ENCODE measurements at regions of chr3 and their contacts with region 1.

Region 1: GRCh38 chr3:52685709-52686691 is at the starts of genes GNL3 and PBRM1:
- DNase-seq: peak; percentile 95
- H3K4me3 ChIP-seq: peak within 1 kb of the TSS; percentile 81 to 97 (median 89)
- H3K27ac ChIP-seq: peak within 1 kb of the TSS; percentile 76
- H3K4me1 ChIP-seq: peaks cover 20% of the 10 kb centered on the region
- H3K27me3 ChIP-seq: no peaks in the 10 kb centered on the region
- CTCF ChIP-seq: no peak
- total RNA-seq, gene GNL3: 81.5 to 97.8 TPM
- total RNA-seq, gene PBRM1: 53.0 to 85.2 TPM

Region 2: DNA sequence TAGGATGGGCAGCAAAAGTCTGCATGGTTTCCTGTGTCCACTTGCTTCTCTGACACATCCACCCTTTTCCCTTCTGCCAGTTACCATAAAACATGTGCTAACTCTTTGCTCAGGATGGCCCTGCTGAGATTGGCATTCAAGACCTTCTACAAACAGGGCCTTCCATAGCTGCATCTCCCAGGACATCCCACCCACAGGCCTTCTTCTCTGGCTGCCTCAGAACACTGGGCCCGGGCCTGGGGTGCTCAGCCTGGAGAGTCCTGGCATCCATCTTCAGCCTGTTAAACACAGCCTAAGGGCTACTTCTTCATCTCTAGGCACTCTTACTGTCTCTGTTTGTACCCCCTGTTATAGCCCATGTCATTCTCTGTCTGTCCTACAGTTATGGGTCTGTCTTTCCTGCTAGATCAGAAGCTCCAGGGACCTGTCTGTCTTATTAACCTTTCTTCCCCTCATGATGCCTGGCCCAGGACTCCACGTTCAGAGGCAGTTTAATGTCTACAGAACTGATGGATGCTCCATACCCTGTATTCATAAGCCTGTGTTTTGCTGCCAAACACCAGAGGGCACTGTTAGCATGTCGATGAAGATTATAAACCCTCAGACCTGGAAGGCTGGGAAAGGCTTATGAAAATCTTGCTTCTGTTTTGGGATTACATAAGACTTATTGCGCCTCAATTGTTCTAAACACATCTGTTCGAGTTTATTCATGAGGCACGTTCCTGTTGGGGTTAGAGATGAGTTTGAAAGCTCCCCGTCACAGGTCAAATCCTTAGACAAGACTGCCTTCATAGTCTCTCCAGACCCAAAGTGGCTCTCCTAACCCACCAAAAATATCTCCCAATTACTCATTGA is 257.6 kb before region 1 on chr3:
- CTCF ChIA-PET with region 1: no interaction called
- dilution Hi-C with region 1: no loop called
- in situ Hi-C with region 1: no loop called
- intact Hi-C with region 1: loop called (anchors 1 kb)
- DNase-seq: peak; percentile 60
- H3K4me3 ChIP-seq: no peak overlapping the region
- H3K27ac ChIP-seq: no peak overlapping the region
- H3K4me1 ChIP-seq: no peaks in the 10 kb centered on the region
- H3K27me3 ChIP-seq: no peaks in the 10 kb centered on the region
- CTCF ChIP-seq: peak; percentile 81 to 94

Region 3: DNA sequence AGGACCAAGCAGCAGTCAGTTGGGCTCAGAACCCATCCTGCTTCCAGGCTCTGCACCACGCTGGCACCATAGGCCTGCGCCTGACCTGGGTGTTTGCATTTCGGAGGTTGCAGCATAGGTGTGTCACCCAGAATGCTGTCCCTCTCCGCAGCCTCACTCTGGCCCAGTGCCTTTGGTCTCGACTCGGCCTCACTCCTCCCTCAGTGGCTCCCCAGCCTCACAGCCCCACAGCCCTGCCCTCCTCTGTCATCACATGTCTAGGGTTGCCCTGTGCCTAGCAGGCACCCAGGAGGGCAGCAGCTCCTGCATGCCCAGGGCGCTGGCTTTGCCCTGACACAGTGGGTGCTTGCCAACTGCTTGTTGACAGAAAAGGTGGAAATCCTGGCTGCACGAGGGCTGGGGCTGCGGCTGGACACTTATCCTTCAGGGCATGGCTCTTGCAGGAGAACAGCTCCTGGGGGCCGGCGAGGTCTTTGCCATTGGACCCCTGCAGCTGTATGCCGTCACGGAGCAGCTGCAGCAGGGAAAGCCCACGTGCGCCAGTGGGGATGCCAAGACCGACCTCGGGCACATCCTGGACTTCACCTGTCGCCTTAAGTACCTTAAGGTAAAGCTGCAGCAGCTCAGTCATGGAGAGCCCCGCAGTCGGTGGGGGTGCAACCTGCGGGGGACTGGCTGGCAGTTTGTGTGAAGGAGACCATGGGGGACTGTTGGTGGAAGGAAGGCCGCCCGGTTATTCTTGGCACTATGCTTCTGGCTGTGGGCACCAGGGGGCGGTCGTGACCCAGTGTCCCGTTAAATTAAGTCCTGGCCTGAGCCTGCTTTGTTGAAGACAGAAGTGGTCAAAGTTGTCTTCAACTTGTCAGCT is 214.4 kb before region 1 on chr3:
- CTCF ChIA-PET with region 1: no interaction called
- dilution Hi-C with region 1: no loop called
- in situ Hi-C with region 1: loop called in 1 of 2 experiments (anchors 10 kb)
- intact Hi-C with region 1: loop called (anchors 1 kb)
- DNase-seq: no peak
- H3K4me3 ChIP-seq: no peak overlapping the region
- H3K27ac ChIP-seq: no peak overlapping the region
- H3K4me1 ChIP-seq: peaks cover 16% of the 10 kb centered on the region
- H3K27me3 ChIP-seq: no peaks in the 10 kb centered on the region
- CTCF ChIP-seq: peak; percentile 65 to 70

Region 4: GRCh38 chr3:52536369-52537164 is 149.4 kb before region 1 on chr3 and contains the start of gene UQCC5:
- CTCF ChIA-PET with region 1: interaction called, 4 read pairs
- dilution Hi-C with region 1: no loop called
- in situ Hi-C with region 1: no loop called
- intact Hi-C with region 1: loop called (anchors 2 kb)
- DNase-seq: peak; percentile 99
- H3K4me3 ChIP-seq: peak within 1 kb of the TSS; percentile 52 to 87 (median 59)
- H3K27ac ChIP-seq: peak within 1 kb of the TSS; percentile 73
- H3K4me1 ChIP-seq: peaks cover 37% of the 10 kb centered on the region
- H3K27me3 ChIP-seq: no peaks in the 10 kb centered on the region
- CTCF ChIP-seq: no peak
- total RNA-seq, gene UQCC5: 1.8 to 27.7 TPM

Region 5: GRCh38 chr3:52670621-52671521 is 15.1 kb before region 1 on chr3:
- CTCF ChIA-PET with region 1: no interaction called
- dilution Hi-C with region 1: no loop called
- in situ Hi-C with region 1: no loop called
- intact Hi-C with region 1: loop called (anchors 1 kb)
- DNase-seq: peak; percentile 100
- H3K4me3 ChIP-seq: peak overlapping the region in 1 of 3 experiments; percentile 10
- H3K27ac ChIP-seq: peak overlapping the region; percentile 96
- H3K4me1 ChIP-seq: peaks cover 23% of the 10 kb centered on the region
- H3K27me3 ChIP-seq: no peaks in the 10 kb centered on the region
- CTCF ChIP-seq: no peak

Region 6: DNA sequence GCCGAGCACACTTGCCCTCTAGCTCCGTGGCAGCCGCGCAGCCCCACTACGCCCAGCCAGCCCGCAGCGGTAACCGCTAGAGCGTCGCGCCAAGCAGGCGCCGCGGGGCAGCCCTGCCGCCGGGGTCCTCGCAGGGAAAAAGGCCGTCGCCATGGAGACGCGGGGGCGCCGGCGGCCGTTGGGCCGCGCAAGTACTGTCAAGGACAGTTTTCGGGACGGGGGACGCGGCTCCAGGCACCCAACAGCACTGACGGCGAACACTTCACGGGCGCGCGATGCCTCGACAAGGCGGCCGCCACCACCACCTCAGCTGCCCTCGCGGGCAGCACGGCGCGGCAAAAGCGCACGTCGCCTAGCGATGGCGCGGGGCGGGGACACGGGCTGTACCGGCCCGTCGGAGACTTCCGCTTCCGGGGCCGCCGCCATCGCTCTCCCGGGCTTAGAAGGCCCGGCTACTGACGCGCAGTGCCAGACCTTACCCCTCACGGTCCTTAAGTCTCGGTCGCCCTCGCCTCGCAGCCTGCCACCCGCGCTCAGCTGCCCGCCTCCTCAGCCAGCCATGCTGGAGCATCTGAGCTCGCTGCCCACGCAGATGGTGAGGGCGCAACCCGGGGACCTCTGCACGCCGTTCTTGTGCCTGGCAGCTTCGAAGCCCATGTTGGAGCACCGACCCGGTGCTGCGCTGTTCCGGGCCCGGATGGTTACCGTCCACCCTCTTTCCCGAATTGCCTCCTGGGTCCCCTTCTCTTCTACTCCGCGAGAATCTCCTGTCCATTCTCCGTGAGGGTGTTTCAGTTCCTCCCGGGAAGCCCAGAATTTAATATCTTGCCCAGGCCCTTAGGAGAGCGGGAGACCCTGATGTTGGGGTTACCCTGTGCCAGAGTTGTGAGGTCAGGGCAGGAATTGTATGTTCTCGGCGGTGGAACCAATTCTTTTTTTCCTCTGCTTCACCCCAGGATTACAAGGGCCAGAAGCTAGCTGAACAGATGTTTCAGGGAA is 20.0 kb after region 1 on chr3 and contains the starts of genes GLT8D1 and SPCS1:
- CTCF ChIA-PET with region 1: no interaction called
- dilution Hi-C with region 1: no loop called
- in situ Hi-C with region 1: no loop called
- intact Hi-C with region 1: loop called (anchors 2 kb)
- DNase-seq: peak; percentile 86
- H3K4me3 ChIP-seq: peak within 1 kb of the TSS; percentile 51 to 100 (median 76)
- H3K27ac ChIP-seq: peak within 1 kb of the TSS; percentile 82
- H3K4me1 ChIP-seq: peaks cover 25% of the 10 kb centered on the region
- H3K27me3 ChIP-seq: no peaks in the 10 kb centered on the region
- CTCF ChIP-seq: no peak
- total RNA-seq, gene GLT8D1: 56.8 to 62.7 TPM
- total RNA-seq, gene SPCS1: 57.5 to 120 TPM